ENCODE measurements at regions of chr1 and their contacts with region 1.

Region 1: DNA sequence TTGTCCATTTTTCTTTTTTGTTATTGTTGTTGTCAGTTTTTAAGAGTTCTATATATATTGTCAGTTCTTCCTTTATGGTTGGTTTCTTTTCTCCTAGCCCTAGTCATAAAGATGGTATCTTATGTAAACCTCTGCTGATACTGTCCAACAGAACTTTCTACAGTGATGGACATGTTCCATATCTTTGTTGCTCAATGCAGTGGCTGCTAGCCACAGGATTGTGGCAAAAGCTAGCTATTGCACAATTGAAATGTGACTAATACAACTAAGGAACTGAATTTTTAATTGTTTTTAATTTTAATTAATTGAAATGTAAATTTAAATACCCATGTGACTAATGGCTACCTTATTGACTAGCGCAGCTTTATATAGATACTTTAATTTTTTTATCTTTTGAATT is 411.8 kb upstream of the PTBP2 start:
- DNase-seq: peak in 2 of 3 donors; percentile 34 to 65
- ATAC-seq: peak; percentile 51 to 67
- H3K4me3 ChIP-seq: no peak overlapping the region
- H3K27ac ChIP-seq: no peak overlapping the region
- H3K4me1 ChIP-seq: peaks cover 1% of the 10 kb centered on the region
- H3K27me3 ChIP-seq: no peaks in the 10 kb centered on the region

Region 2: GRCh38 chr1:96329121-96329520 is 19.3 kb after region 1 on chr1:
- intact Hi-C with region 1: loop called in 1 of 4 experiments (anchors 2 kb)
- DNase-seq: no peak
- ATAC-seq: no peak
- H3K4me3 ChIP-seq: no peak overlapping the region
- H3K27ac ChIP-seq: no peak overlapping the region
- H3K4me1 ChIP-seq: no peaks in the 10 kb centered on the region
- H3K27me3 ChIP-seq: no peaks in the 10 kb centered on the region

Region 3: GRCh38 chr1:96400075-96400474 is 90.3 kb after region 1 on chr1:
- intact Hi-C with region 1: no loop called
- DNase-seq: no peak
- ATAC-seq: no peak
- H3K4me3 ChIP-seq: no peak overlapping the region
- H3K27ac ChIP-seq: no peak overlapping the region
- H3K4me1 ChIP-seq: no peaks in the 10 kb centered on the region
- H3K27me3 ChIP-seq: no peaks in the 10 kb centered on the region

Region 4: DNA sequence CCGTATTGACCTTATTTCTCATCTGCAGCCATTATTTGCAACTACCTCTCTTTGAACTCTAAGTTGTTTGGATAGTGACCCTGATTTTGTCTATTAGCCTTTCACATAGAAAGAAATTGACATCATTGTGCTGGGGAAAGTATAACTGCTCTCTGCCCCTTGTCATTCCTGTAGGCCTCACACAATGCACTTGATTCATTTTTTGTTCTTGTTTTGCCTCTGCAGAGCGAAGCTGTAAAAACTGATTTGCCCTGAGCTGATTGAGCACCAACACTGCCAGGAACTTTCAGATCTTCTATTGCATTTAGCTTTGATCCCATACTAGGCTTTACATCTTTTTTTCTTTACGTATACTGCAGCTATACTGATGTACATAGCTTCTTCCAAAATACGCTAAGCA is 244.6 kb after region 1 on chr1:
- intact Hi-C with region 1: no loop called
- DNase-seq: no peak
- ATAC-seq: no peak
- H3K4me3 ChIP-seq: no peak overlapping the region
- H3K27ac ChIP-seq: no peak overlapping the region
- H3K4me1 ChIP-seq: no peaks in the 10 kb centered on the region
- H3K27me3 ChIP-seq: no peaks in the 10 kb centered on the region